Common myeloid progenitor, CD34-positive (primary cell): ENCODE measurements at regions of chr7 and their contacts with region 1.

Region 1: DNA sequence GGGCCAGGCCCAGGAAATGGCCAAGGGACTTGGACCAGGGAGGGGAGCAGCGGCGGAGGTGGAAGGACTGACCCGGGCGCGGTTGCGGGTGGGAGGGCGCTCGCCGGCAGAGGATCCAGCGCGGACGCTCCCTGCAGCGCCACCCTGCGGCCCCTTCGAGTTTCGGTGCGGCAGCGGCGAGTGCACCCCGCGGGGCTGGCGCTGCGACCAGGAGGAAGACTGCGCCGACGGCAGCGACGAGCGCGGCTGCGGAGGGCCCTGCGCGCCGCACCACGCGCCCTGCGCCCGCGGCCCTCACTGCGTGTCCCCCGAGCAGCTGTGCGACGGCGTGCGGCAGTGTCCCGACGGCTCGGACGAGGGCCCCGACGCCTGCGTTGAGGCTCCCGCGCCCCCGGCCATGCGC is 16.8 kb upstream of the ZNF467 start:
- DNase-seq: peak; percentile 53 to 77 (median 75)
- H3K4me3 ChIP-seq: peak overlapping the region in 2 of 7 experiments; percentile 40 to 53
- H3K27ac ChIP-seq: no peak overlapping the region
- H3K4me1 ChIP-seq: peaks cover 0 to 13% (median 8%) of the 10 kb centered on the region in 4 experiments
- H3K27me3 ChIP-seq: peaks cover 0 to 27% (median 7%) of the 10 kb centered on the region in 5 experiments

Region 2: DNA sequence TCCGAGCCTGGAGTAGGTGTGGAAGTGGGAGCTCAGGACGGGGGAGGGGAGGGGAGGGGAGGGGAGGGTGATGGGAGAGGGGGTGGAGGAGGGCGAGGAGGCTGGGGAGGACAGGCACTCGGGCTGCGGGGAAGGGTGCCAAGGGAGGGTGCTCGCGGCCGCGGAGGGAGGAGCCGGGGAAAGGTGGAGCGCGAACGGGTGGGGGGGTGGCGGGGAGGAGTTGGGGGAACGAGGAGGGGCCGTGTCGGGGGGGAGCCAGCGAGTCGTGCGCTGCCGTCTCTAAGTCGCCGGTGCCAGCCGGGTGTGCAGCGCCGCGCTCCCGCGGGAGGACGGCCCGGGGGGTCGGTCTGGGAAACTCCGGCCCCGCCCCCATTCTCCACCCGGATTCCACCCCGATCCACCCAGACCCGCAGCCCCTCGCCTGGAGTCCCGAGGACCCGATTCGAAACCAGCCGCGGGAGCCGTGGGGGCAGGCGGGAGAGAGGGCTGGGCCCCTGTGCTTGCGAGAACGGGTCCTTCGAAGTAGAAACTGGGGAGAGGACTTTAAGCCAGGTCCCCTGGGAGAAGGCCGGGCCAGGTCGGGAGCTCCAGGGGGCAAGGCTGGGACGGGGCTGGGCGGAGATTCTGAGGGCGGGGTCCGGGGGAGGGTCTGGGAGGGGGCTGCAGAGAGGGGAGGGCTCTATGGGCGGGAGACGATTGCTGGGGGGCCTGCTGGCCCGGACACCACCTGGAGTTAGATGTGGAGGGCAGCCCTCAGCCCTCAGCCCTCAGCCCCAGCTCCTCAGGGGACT is 16.5 kb before region 1 on chr7 and contains the start of gene ZNF467:
- CTCF ChIA-PET with region 1: interaction called, 31 read pairs
- POLR2A ChIA-PET with region 1: no interaction called
- DNase-seq: peak; percentile 50 to 70 (median 67)
- H3K4me3 ChIP-seq: peak within 1 kb of the TSS; percentile 37 to 88 (median 68)
- H3K27ac ChIP-seq: peak within 1 kb of the TSS in 1 of 2 experiments; percentile 73
- H3K4me1 ChIP-seq: peaks cover 4 to 55% (median 50%) of the 10 kb centered on the region in 4 experiments
- H3K27me3 ChIP-seq: no peaks in the 10 kb centered on the region

Region 3: DNA sequence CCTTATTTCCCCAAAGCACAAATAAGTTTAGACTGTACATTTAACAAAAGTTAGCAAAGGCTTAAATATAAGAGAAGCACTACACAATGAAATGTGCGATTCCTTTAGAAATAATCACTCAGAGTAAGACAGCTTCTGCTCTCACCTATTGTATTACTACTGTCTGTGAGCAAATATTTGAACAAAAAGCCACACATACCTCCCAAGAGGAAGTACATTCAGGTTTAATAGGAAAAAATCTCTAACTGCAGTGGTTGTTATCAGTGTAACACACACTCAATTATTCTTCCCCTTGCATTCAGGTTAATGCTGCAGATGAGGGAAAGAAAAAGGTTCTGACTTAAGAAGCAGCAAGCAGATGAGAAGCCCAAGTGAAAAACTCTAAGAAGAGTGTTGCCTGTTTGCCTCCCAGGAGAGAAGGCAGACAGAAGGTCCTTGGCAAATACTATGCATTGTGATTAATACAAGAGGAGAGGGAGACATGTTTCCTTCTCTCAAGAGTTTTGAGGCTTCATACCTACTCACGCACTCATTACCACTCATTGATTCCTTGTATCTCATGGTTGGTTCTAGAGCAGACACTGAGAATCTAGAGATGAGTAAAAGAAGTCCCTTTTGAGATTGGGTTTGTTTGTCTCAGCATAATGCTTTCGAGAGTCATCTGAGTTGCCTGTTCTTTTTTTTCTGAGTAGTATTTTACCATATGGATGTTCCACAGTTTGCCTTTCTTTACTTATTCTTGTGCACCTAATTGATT is 790.7 kb after region 1 on chr7:
- CTCF ChIA-PET with region 1: no interaction called
- POLR2A ChIA-PET with region 1: no interaction called
- DNase-seq: peak in 2 of 3 donors; percentile 57 to 75
- H3K4me3 ChIP-seq: peak overlapping the region in 1 of 7 experiments; percentile 0
- H3K27ac ChIP-seq: no peak overlapping the region
- H3K4me1 ChIP-seq: peaks cover 5 to 15% (median 8%) of the 10 kb centered on the region in 4 experiments
- H3K27me3 ChIP-seq: peaks cover 0 to 5% (median 0%) of the 10 kb centered on the region in 5 experiments